Activated CD4-positive, alpha-beta T cell treated with anti-CD3 and anti-CD28 coated beads for 36 hours (primary cell): ENCODE measurements at regions of chr14 and their contacts with region 1.

Region 1: GRCh38 chr14:22986508-22987054 is 4.2 kb upstream of the AJUBA start:
- DNase-seq: peak; percentile 95
- ATAC-seq: peak; percentile 61
- H3K4me3 Mint-ChIP-seq: no peak overlapping the region
- H3K27ac Mint-ChIP-seq: no peak overlapping the region
- H3K4me1 Mint-ChIP-seq: no peaks in the 10 kb centered on the region
- H3K27me3 Mint-ChIP-seq: no peaks in the 10 kb centered on the region

Region 2: GRCh38 chr14:22822571-22823098 is 163.9 kb before region 1 on chr14:
- CTCF ChIA-PET with region 1: interaction called, 3 read pairs
- POLR2A ChIA-PET with region 1: no interaction called
- intact Hi-C with region 1: loop called (anchors 2 to 10 kb)
- DNase-seq: peak; percentile 80
- ATAC-seq: peak; percentile 75
- H3K4me3 Mint-ChIP-seq: peak overlapping the region; percentile 55
- H3K27ac Mint-ChIP-seq: peak overlapping the region; percentile 25
- H3K4me1 Mint-ChIP-seq: peaks cover 27% of the 10 kb centered on the region
- H3K27me3 Mint-ChIP-seq: peaks cover 5% of the 10 kb centered on the region

Region 3: GRCh38 chr14:22852940-22853767 is 133.4 kb before region 1 on chr14:
- CTCF ChIA-PET with region 1: no interaction called
- POLR2A ChIA-PET with region 1: no interaction called
- intact Hi-C with region 1: no loop called
- DNase-seq: peak; percentile 94
- ATAC-seq: peak; percentile 82
- H3K4me3 Mint-ChIP-seq: peak overlapping the region; percentile 69
- H3K27ac Mint-ChIP-seq: peak overlapping the region; percentile 81
- H3K4me1 Mint-ChIP-seq: peaks cover 26% of the 10 kb centered on the region
- H3K27me3 Mint-ChIP-seq: peaks cover 7% of the 10 kb centered on the region

Region 4: DNA sequence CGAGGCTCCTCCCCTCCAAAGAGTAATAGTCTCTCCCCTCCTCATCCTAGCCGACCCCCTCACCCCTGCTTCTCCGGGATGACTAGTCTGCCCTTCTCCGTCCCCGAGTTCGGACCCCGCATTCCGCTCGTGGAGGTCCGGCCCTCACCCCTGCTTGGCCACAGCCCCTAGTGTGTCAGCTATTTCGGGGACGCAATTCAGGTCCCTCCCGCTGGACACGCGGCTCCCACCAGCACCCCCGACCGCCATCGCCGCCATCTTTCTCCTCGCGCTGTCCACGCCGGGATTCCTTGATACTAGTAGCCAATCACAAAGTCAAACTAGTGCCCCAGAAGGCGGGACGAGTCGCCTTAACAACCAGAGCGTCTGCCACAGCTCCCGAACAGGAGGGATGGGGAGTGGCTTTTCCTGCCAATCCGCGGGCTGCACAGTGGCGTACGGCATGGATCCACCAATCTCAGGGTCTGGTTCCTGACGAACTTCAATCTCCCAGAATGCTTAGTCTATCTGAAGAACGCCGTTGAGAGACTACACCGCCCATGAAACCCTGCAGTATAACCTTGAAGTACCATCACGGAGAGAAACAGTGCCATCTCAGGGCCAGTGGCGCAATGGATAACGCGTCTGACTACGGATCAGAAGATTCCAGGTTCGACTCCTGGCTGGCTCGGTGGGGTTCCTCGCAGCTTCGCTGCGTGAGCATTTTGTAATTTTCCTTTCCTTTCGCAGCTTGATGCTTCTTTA is 57.3 kb before region 1 on chr14 and contains the start of gene PRMT5:
- CTCF ChIA-PET with region 1: interaction called, 37 read pairs
- POLR2A ChIA-PET with region 1: no interaction called
- intact Hi-C with region 1: loop called (anchors 1 kb)
- DNase-seq: peak; percentile 99
- ATAC-seq: peak; percentile 98
- H3K4me3 Mint-ChIP-seq: no peak within 1 kb of the TSS
- H3K27ac Mint-ChIP-seq: no peak within 1 kb of the TSS
- H3K4me1 Mint-ChIP-seq: peaks cover 39% of the 10 kb centered on the region
- H3K27me3 Mint-ChIP-seq: no peaks in the 10 kb centered on the region
- total RNA-seq, gene PRMT5: 121 to 151 TPM

Region 5: GRCh38 chr14:22966783-22967269 is 19.8 kb before region 1 on chr14:
- CTCF ChIA-PET with region 1: interaction called, 99 read pairs
- POLR2A ChIA-PET with region 1: interaction called, 3 read pairs
- intact Hi-C with region 1: no loop called
- DNase-seq: no peak
- ATAC-seq: no peak
- H3K4me3 Mint-ChIP-seq: no peak overlapping the region
- H3K27ac Mint-ChIP-seq: no peak overlapping the region
- H3K4me1 Mint-ChIP-seq: no peaks in the 10 kb centered on the region
- H3K27me3 Mint-ChIP-seq: no peaks in the 10 kb centered on the region

Region 6: DNA sequence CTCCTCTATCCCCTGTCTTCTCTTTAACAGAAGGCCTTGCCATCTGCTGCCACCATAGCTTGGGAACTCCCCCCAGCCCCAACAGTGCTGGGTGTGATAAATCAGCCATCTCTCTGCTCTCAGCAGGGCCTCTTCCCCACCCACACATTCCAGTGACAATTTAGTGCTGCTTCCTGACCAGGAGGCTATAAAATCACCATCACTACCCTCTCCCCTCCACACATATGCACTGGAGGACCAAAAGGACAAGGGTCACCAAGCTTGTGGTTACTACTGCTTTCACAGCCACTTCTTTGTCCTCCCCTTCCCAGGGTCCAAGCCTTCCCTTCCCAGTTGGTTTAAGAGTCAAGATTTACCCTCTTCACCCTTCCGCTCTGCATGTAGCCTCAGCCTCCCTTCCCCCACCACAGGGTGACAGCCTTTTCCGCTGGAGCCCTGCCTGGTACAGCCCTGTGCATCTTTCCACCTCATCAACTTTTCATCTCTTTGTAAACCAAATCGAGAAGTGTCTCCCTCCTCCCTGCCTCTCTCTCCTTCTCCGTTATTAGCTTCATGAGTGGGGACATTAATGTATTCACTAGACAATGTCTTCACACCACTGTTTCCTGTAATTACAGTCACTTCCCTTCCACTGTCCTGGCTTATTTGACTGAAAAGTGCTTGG is 38.7 kb after region 1 on chr14:
- CTCF ChIA-PET with region 1: interaction called, 44 read pairs
- POLR2A ChIA-PET with region 1: no interaction called
- intact Hi-C with region 1: no loop called
- DNase-seq: peak; percentile 70
- ATAC-seq: peak; percentile 58
- H3K4me3 Mint-ChIP-seq: peak overlapping the region; percentile 37
- H3K27ac Mint-ChIP-seq: peak overlapping the region; percentile 90
- H3K4me1 Mint-ChIP-seq: peaks cover 72% of the 10 kb centered on the region
- H3K27me3 Mint-ChIP-seq: no peaks in the 10 kb centered on the region

Region 7: DNA sequence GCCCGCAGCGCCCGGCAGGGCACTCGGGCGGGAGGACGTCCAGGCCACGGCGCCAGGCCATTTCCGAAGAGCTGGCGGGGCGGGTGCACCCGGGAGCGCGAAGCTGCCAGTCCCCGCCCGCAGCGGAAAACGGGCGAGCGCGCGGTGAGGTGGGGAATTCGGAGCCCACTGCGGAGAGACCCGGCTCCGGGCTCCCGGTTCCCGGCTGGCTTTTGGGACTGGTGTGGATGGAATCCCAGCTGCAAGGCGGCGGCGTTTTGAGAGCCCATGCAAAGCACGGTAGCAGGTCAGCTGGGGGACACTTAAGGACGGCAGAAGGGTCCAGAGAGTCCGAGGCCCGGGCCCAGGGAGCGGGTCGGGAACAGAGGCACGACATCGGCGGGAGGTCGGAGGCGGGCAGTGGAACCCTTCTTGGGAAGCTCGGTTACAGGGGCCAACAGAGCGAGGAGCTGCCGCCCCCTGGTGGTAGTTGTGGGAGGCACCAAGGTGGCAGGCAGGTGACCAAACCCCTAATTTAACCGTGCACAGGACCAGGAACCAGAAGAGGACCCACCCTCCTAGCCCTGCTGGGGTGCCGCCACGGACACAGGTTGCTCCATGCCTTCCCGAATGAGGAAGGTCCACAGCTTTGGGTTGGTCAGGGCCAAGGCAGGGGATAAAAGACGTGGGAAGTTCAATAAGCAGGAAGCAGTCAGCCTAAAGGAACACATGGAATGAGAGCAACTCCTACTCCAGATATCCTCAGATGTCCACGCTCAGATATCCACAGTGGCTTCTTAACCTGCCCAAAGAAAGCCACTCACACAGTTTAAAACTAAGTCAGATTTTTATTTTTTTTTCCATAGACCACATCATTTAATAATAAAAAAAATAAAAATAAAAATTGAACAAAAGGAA is 71.4 kb after region 1 on chr14:
- CTCF ChIA-PET with region 1: interaction called, 751 read pairs
- POLR2A ChIA-PET with region 1: interaction called, 13 read pairs
- intact Hi-C with region 1: loop called (anchors 1 kb)
- DNase-seq: peak; percentile 93
- ATAC-seq: peak; percentile 81
- H3K4me3 Mint-ChIP-seq: peak overlapping the region; percentile 74
- H3K27ac Mint-ChIP-seq: no peak overlapping the region
- H3K4me1 Mint-ChIP-seq: peaks cover 15% of the 10 kb centered on the region
- H3K27me3 Mint-ChIP-seq: no peaks in the 10 kb centered on the region

Region 8: GRCh38 chr14:23095196-23096108 is 108.9 kb after region 1 on chr14 and contains the start of gene C14orf119:
- CTCF ChIA-PET with region 1: interaction called, 13 read pairs
- POLR2A ChIA-PET with region 1: interaction called, 6 read pairs
- intact Hi-C with region 1: no loop called
- DNase-seq: peak; percentile 100
- ATAC-seq: peak; percentile 93
- H3K4me3 Mint-ChIP-seq: no peak within 1 kb of the TSS
- H3K27ac Mint-ChIP-seq: no peak within 1 kb of the TSS
- H3K4me1 Mint-ChIP-seq: peaks cover 19% of the 10 kb centered on the region
- H3K27me3 Mint-ChIP-seq: no peaks in the 10 kb centered on the region
- total RNA-seq, gene C14orf119: 43.8 to 51.5 TPM

Region 9: GRCh38 chr14:23174276-23175184 is 187.9 kb after region 1 on chr14:
- CTCF ChIA-PET with region 1: no interaction called
- POLR2A ChIA-PET with region 1: no interaction called
- intact Hi-C with region 1: no loop called
- DNase-seq: no peak
- ATAC-seq: no peak
- H3K4me3 Mint-ChIP-seq: no peak overlapping the region
- H3K27ac Mint-ChIP-seq: no peak overlapping the region
- H3K4me1 Mint-ChIP-seq: peaks cover 18% of the 10 kb centered on the region
- H3K27me3 Mint-ChIP-seq: peaks cover 10% of the 10 kb centered on the region

Region 10: DNA sequence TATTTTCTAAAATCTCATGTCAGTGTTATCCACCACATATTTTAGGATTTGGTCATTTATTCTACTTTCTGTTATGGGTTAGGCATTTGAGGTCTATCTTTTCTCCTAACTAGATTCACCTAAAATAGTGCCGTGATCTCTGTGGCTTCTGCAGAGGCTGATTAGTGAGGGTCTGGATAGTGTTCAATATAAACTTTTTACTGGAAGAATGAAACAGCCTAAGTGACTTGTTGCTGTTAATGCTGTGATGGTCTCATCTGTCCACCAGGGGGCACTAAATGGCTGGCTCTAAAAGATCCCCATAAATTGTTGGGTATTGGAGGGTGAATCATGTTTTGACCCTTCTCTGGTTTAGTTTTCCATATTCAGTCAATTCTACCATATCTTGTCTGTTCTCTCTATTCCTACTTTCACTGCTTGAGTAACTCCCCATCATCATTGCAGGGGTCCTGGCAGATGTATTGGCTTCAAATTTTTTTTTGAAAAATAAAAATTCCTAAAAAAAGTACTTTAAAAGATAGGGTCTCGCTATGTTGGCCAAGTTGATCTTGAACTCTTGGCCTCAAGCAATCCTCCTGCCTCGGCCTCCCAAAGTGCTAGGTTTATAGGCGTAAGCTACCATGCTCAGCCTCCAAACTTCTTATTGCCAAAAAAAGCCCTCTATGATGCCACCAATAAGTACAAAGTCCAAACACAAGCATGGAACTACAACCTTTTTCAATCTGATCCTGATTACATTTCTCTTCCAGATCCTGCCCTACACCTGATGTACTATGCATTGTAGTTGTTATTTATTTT is 341.6 kb after region 1 on chr14:
- CTCF ChIA-PET with region 1: no interaction called
- POLR2A ChIA-PET with region 1: no interaction called
- intact Hi-C with region 1: no loop called
- DNase-seq: peak; percentile 82
- ATAC-seq: peak; percentile 92
- H3K4me3 Mint-ChIP-seq: no peak overlapping the region
- H3K27ac Mint-ChIP-seq: no peak overlapping the region
- H3K4me1 Mint-ChIP-seq: peaks cover 6% of the 10 kb centered on the region
- H3K27me3 Mint-ChIP-seq: no peaks in the 10 kb centered on the region